ENCODE measurements at regions of chr17 and their contacts with region 1.

Region 1: DNA sequence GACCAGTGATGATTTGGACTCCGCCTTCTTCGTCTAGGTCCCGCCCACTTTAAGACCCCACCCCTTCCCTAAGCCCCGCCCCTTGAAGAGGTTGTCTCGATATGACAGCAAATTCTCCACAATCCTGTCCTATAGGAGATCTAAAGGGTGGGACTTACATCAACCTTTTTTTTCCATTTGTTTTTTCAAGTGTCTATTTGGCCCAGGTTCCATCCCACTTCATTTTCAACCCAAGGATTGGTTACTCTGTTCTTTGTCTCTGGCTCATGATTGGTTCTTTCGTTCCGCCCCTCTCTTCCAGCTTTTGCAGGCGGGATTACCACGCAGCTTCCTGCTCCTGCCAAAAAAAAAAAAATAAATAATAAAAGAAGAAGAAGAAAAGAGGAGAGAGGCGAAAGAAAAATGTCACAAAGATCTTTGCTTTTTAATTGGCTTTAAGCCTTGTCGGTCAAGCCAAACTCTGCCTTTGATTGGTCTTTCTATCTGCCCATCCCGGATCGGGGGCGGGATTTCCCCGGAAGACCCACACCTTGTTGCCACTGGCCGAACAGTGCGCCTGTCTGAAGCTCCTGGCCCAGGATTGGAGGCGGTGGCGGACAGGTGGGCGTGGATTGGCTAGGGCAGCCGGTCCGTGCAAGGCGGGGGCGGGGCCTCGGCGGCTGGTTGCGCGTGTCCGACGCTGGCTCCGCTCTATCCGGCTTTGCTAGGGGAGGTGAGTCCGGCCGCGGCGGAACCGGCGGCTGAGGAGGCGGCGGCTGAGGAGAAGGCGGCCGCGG is 1.2 kb upstream of the NLK start:
- DNase-seq: peak; percentile 100
- H3K4me3 ChIP-seq: peak overlapping the region; percentile 87
- H3K4me3 Mint-ChIP-seq: peak overlapping the region; percentile 99
- H3K27ac Mint-ChIP-seq: peak overlapping the region; percentile 93
- H3K4me1 ChIP-seq: peaks cover 40% of the 10 kb centered on the region
- H3K4me1 Mint-ChIP-seq: peaks cover 24% of the 10 kb centered on the region
- H3K27me3 ChIP-seq: no peaks in the 10 kb centered on the region
- H3K27me3 Mint-ChIP-seq: no peaks in the 10 kb centered on the region
- CTCF ChIP-seq: no peak

Region 2: DNA sequence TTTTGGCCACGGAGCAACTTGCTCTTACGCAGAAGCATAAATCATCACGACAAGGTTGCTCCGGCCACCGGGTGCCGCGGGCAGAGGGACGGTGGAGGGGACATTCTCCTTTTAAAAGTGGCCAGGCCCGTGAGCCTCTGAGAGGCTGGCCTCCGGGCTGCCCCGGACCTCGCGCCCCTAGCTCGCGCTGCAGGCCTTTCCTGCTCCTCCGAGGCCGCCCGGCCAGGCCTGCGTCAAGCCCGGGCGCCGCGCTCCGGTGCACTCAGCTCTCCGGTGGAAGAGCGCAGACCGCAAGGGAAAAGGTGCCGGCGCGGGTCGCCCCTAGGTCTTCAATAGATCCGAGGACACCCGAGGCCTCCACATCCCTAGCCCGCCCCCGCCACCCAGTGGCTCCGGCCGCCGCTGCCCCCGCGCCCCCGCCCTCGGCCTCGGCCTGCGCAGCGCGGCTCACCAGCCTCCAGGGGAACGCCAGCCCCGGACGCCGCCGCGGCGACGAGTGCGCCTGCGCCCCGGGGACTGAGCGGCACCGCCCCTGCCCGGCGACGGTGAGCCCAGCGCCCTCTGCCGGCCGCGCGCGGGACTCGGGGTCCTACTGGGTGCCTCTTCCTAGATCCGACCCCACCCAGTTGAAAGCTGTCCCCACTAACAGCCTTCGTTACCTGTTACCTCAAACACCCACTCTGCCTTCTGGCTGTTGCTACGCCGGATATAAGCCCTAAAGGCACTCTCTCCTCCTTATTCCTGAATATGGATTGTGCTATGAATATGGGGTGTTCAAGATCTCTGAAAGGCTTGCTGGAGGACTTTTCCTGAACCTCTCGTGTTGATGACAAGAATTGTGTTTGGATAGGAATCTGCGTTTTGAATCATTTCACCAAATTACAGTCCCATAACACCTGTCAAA is 148.1 kb before region 1 on chr17 and contains the start of gene LYRM9:
- CTCF ChIA-PET with region 1: interaction called, 15 read pairs
- POLR2A ChIA-PET with region 1: interaction called, 10 read pairs
- intact Hi-C with region 1: loop called (anchors 5 kb)
- DNase-seq: peak; percentile 98 to 100
- H3K4me3 ChIP-seq: peak within 1 kb of the TSS; percentile 75
- H3K4me3 Mint-ChIP-seq: peak within 1 kb of the TSS; percentile 70
- H3K27ac Mint-ChIP-seq: peak within 1 kb of the TSS; percentile 28
- H3K4me1 ChIP-seq: peaks cover 39% of the 10 kb centered on the region
- H3K4me1 Mint-ChIP-seq: peaks cover 47% of the 10 kb centered on the region
- H3K27me3 ChIP-seq: no peaks in the 10 kb centered on the region
- H3K27me3 Mint-ChIP-seq: no peaks in the 10 kb centered on the region
- CTCF ChIP-seq: peak; percentile 98 to 99
- total RNA-seq, gene LYRM9: 25.6 and 29.1 TPM in 2 replicates

Region 3: GRCh38 chr17:27985736-27986399 is 55.4 kb before region 1 on chr17:
- CTCF ChIA-PET with region 1: interaction called, 6 read pairs
- POLR2A ChIA-PET with region 1: interaction called, 12 read pairs
- intact Hi-C with region 1: loop called (anchors 1 kb)
- DNase-seq: no peak
- H3K4me3 ChIP-seq: no peak overlapping the region
- H3K4me3 Mint-ChIP-seq: no peak overlapping the region
- H3K27ac Mint-ChIP-seq: peak overlapping the region; percentile 55
- H3K4me1 ChIP-seq: peaks cover 87% of the 10 kb centered on the region
- H3K4me1 Mint-ChIP-seq: peaks cover 71% of the 10 kb centered on the region
- H3K27me3 ChIP-seq: no peaks in the 10 kb centered on the region
- H3K27me3 Mint-ChIP-seq: no peaks in the 10 kb centered on the region
- CTCF ChIP-seq: no peak

Region 4: DNA sequence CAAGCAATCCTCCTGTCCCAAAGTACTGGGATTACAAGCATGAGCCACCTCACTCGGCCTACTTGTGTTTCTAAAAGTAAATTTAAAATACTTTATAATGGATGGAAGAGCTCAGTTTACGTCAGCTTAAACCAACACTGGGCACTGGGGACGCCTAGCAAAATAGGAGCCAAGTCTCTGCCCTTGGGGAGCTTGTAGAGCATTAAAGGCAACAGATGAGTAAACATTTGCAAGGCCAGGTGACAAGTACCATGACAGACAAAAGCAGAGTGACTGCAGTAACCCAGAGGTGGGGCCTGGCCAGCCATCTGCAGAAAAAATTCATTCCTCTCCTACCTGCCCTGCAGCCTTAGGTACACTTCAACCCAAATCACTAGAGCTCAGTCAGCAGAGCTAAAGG is 10.9 kb before region 1 on chr17:
- CTCF ChIA-PET with region 1: interaction called, 8 read pairs
- POLR2A ChIA-PET with region 1: interaction called, 18 read pairs
- intact Hi-C with region 1: no loop called
- DNase-seq: peak in 1 of 2 experiments; percentile 49
- H3K4me3 ChIP-seq: no peak overlapping the region
- H3K4me3 Mint-ChIP-seq: no peak overlapping the region
- H3K27ac Mint-ChIP-seq: no peak overlapping the region
- H3K4me1 ChIP-seq: peaks cover 5% of the 10 kb centered on the region; the same call in 1 of the 2 replicates
- H3K4me1 Mint-ChIP-seq: no peaks in the 10 kb centered on the region
- H3K27me3 ChIP-seq: no peaks in the 10 kb centered on the region
- H3K27me3 Mint-ChIP-seq: no peaks in the 10 kb centered on the region
- CTCF ChIP-seq: no peak

Region 5: DNA sequence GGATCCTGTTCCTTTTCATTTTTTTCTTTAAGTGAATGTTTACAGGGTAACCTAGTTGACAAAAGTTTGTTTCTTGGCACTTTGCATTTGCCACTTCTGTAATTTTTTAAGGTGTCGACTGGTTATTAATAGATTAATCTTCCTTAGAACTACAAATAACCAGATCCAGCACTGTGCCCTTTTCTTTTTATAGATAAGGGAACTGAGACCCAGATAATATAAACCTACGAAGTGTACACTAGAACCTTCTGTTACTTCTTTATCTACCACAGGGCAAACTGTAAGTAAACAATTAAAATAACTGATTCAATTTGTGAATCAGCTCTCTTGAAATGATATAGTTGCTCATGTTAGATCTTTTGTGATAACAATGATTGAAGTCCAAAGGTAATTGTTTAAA is 56.6 kb after region 1 on chr17:
- CTCF ChIA-PET with region 1: no interaction called
- POLR2A ChIA-PET with region 1: no interaction called
- intact Hi-C with region 1: no loop called
- DNase-seq: no peak
- H3K4me3 ChIP-seq: no peak overlapping the region
- H3K4me3 Mint-ChIP-seq: no peak overlapping the region
- H3K27ac Mint-ChIP-seq: no peak overlapping the region
- H3K4me1 ChIP-seq: peaks cover 16% of the 10 kb centered on the region
- H3K4me1 Mint-ChIP-seq: peaks cover 15% of the 10 kb centered on the region
- H3K27me3 ChIP-seq: no peaks in the 10 kb centered on the region
- H3K27me3 Mint-ChIP-seq: no peaks in the 10 kb centered on the region
- CTCF ChIP-seq: no peak

Region 6: DNA sequence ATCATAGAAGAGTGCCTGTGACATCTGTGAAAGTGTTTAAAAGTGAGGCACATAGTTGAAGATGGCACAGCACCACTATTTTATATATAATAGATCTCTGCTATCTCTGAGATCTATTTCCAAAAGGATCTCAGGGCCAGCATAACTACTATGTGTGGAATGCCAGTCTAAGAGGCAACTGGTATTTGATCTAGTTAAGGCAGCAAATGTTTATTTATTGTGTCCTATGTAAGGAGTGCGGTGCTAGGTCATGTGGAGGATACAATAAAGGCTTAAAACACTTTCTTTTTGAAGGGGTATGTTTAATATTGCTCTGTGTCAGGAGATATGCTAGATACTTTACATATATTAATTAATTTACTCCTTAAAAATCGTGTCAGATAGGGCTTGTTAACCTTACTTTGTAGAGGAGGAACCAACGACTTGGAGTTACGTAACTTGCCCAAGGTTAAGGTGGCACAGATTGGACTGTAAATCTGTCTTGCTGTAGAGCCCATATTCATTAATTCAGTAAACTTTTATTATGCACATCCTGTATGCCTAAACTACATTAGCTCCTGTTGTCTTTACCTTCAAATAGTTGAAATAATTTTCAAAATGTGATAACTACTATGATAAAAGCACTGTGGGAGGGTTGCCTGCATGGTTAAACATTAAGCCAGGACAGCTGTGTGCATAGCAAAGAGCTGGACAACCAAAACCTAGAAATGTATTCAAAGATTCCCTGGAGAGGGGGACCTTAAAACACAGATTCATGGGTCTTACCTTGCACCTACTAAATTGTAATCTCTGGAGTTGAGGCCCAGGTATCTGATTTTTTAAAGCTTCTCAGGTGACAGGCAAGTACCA is 84.5 kb after region 1 on chr17:
- CTCF ChIA-PET with region 1: interaction called, 4 read pairs
- POLR2A ChIA-PET with region 1: interaction called, 4 read pairs
- intact Hi-C with region 1: loop called (anchors 1 kb)
- DNase-seq: peak in 1 of 2 experiments; percentile 55
- H3K4me3 ChIP-seq: no peak overlapping the region
- H3K4me3 Mint-ChIP-seq: peak overlapping the region; percentile 46
- H3K27ac Mint-ChIP-seq: no peak overlapping the region
- H3K4me1 ChIP-seq: peaks cover 30% of the 10 kb centered on the region
- H3K4me1 Mint-ChIP-seq: peaks cover 43% of the 10 kb centered on the region
- H3K27me3 ChIP-seq: no peaks in the 10 kb centered on the region
- H3K27me3 Mint-ChIP-seq: no peaks in the 10 kb centered on the region
- CTCF ChIP-seq: no peak

Region 7: DNA sequence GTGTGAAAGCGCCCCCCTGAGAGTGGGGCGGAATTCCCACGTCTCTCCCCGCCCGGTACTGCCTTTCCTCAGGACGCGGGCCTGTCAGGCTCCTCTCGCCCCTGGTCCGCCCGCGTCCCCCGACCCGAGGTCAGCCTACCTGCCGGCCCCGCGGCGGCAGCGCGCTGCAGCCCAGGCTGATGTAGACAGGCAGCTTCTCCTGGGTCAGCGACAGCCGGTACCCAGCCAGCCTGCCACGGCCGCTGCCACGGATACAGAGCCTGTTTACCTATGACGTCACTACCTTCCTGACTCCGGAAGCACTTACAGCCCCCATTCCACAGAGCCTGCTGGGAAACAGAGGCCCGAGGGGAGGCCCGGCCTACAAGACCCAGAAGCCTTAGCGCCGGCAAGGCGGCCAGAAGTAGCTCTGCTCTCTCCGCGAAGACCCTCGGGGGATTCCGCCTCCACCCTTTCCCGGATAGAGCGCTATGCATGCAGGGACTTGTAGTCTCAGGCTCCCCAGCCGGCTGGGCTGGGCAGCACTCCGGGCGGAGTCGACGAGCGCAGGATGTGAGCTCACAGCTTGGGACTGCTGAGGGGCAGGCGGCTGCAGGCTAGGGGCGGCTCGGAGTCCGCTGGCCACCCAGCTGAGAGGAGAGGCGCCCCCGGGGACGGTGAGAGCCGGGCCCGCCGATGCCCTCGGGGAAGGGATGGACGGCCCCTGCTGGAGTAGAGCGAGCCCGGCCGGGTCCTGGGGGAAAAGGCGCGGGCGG is 294.1 kb after region 1 on chr17 and contains the starts of genes IFT20 and TNFAIP1:
- CTCF ChIA-PET with region 1: no interaction called
- POLR2A ChIA-PET with region 1: interaction called, 25 read pairs
- intact Hi-C with region 1: loop called (anchors 5 kb)
- DNase-seq: peak; percentile 100
- H3K4me3 ChIP-seq: peak within 1 kb of the TSS; percentile 86
- H3K4me3 Mint-ChIP-seq: peak within 1 kb of the TSS; percentile 97
- H3K27ac Mint-ChIP-seq: peak within 1 kb of the TSS; percentile 98
- H3K4me1 ChIP-seq: peaks cover 27% of the 10 kb centered on the region
- H3K4me1 Mint-ChIP-seq: peaks cover 33% of the 10 kb centered on the region
- H3K27me3 ChIP-seq: no peaks in the 10 kb centered on the region
- H3K27me3 Mint-ChIP-seq: no peaks in the 10 kb centered on the region
- CTCF ChIP-seq: no peak
- total RNA-seq, gene IFT20: 86.3 and 89.9 TPM in 2 replicates
- total RNA-seq, gene TNFAIP1: 105 and 119 TPM in 2 replicates

Region 8: DNA sequence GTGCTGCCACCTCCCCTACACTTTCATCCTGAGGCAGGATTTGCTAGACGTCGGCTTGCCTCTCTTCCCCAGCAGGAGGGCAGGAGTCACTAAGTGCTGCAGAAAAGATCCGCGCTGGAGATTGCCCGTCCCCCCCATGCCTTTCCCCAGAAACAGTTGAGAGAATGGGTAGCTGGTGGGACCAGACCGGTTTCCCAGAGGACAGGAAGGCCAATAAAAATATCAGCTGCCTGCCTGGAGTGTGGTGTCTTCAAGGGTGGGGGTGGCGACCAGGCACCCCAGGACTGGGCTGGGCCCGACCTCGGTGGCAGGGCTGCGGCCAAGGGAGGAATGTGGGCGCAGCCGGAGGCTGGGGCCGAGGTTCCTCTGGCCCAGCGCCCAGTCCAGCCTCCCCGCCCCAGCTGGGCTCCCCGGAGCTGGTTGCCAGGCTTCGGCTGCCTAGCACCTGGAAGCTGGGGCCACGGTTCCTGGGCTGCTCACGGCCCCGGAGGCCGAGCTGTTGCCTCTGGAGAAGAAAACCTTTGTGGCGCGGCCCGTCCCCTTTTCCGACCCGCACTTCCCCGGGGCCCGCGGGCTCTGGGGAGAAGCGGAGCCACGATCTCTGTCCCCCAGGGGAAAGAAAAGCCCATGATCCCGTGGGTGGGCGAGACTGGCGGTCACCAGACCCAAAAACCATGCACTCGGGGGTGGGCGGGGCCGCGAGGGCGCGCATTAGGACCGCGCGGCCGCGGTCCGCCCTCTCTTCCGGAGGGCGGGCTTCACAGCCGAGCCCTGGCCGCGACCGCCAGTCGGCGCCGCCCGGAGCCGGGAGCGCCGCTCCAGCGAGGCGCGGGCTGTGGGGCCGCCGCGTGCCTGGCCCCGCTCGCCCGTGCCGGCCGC is 702.2 kb after region 1 on chr17 and contains the start of gene TRAF4:
- CTCF ChIA-PET with region 1: no interaction called
- POLR2A ChIA-PET with region 1: no interaction called
- intact Hi-C with region 1: no loop called
- DNase-seq: peak; percentile 83 to 91
- H3K4me3 ChIP-seq: peak within 1 kb of the TSS; percentile 68
- H3K4me3 Mint-ChIP-seq: peak within 1 kb of the TSS; percentile 95
- H3K27ac Mint-ChIP-seq: peak within 1 kb of the TSS; percentile 96
- H3K4me1 ChIP-seq: peaks cover 40% of the 10 kb centered on the region
- H3K4me1 Mint-ChIP-seq: peaks cover 12% of the 10 kb centered on the region
- H3K27me3 ChIP-seq: no peaks in the 10 kb centered on the region
- H3K27me3 Mint-ChIP-seq: no peaks in the 10 kb centered on the region
- CTCF ChIP-seq: peak in 1 of 2 experiments; percentile 18
- total RNA-seq, gene TRAF4: 140 and 154 TPM in 2 replicates

Measured in Caco-2 (cell line).